ENCODE measurements at regions of chr1 and their contacts with region 1.

Region 1: GRCh38 chr1:40612345-40612831 is 53.1 kb downstream of the RIMS3 start:
- DNase-seq: peak in 1 of 2 donors; percentile 68
- H3K4me3 ChIP-seq: no peak overlapping the region
- H3K27ac ChIP-seq: no peak overlapping the region
- H3K4me1 ChIP-seq: peaks cover 0 to 4% (median 0%) of the 10 kb centered on the region in 4 donors
- H3K27me3 ChIP-seq: no peaks in the 10 kb centered on the region
- CTCF ChIP-seq: peak; percentile 73 to 84

Region 2: GRCh38 chr1:40449684-40450494 is 162.5 kb before region 1 on chr1 and contains the start of gene ZFP69B:
- intact Hi-C with region 1: no loop called
- DNase-seq: peak; percentile 81 to 93
- H3K4me3 ChIP-seq: peak within 1 kb of the TSS; percentile 67 to 71
- H3K27ac ChIP-seq: peak within 1 kb of the TSS; percentile 83 to 85
- H3K4me1 ChIP-seq: peaks cover 0 to 8% (median 3%) of the 10 kb centered on the region in 4 donors
- H3K27me3 ChIP-seq: no peaks in the 10 kb centered on the region
- CTCF ChIP-seq: no peak

Region 3: DNA sequence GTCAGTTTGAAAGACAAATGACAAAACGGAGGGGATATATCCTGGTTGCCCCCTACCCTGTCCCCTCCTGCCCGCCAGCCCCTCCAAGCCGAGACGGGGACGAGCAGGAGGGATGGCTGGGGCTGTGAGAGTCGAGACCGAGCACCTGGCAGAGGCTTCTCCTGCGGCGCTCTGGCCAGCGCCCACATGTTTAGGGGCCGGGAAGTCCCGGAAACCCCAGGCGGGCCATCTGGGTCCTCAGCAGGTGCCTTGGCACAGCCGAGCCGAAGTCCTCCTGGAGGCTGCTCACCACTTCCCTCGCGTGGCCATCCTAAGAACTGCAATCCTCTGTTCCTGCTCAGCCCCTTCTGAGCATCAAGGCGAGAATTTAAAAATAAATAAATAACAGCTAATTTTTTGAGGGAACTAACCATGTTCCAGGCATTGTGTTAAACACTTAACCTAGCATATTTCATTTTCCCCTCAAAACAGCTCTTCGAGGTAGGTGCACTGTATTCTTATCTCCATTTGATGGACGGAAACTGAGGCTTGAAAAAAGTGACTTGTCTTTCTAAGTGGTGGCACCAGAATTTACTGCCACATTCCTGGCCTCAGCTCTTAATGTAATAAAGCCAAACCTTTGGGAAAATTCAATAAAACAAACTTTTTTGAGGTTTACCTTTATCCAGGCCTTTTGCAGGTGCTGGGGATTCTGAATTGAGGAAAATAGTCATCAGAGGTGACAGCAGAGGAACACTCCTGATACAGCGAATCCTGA is 56.6 kb after region 1 on chr1:
- intact Hi-C with region 1: loop called (anchors 10 kb)
- DNase-seq: peak; percentile 68 to 83
- H3K4me3 ChIP-seq: no peak overlapping the region
- H3K27ac ChIP-seq: no peak overlapping the region
- H3K4me1 ChIP-seq: peaks cover 0 to 34% (median 26%) of the 10 kb centered on the region in 4 donors
- H3K27me3 ChIP-seq: no peaks in the 10 kb centered on the region
- CTCF ChIP-seq: peak; percentile 84 to 97

Region 4: DNA sequence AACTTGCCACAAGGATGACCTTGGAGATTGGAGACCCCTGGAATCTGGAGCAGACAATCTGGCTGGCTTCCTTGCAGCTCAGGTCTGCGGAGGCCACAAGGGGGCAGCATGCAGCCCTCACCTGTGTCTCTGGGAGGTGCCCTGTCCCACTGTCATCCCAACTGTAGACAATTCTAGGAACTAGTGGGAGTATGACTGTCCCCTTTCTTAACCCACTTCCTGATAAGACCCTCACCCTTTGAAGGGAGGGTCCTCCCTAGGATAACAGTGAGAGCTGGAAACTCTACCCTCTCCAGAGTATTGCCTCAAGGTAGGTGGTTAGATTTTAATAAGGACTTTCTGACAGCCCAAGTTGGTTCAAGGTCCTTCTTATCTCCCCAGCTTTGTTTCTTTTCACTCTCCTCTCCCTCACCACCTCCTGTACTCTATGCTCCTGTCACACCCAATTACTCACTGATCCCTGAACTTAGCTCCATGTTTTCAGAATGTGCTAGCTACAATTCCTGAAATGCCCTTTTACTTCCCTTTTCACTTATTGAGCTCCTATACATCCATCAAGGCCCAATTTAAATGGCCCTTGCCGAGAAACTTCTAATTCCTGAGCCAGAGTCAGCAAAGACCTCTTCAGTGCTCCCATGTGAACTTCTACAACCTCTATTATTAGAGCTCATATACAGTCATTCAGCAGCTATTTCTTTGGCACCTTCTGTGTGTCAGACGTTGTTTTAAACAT is 162.0 kb after region 1 on chr1:
- intact Hi-C with region 1: loop called (anchors 5 kb)
- DNase-seq: peak in 1 of 2 donors; percentile 66
- H3K4me3 ChIP-seq: no peak overlapping the region
- H3K27ac ChIP-seq: no peak overlapping the region
- H3K4me1 ChIP-seq: peaks cover 0 to 14% (median 3%) of the 10 kb centered on the region in 4 donors
- H3K27me3 ChIP-seq: no peaks in the 10 kb centered on the region
- CTCF ChIP-seq: peak; percentile 66 to 77

Region 5: DNA sequence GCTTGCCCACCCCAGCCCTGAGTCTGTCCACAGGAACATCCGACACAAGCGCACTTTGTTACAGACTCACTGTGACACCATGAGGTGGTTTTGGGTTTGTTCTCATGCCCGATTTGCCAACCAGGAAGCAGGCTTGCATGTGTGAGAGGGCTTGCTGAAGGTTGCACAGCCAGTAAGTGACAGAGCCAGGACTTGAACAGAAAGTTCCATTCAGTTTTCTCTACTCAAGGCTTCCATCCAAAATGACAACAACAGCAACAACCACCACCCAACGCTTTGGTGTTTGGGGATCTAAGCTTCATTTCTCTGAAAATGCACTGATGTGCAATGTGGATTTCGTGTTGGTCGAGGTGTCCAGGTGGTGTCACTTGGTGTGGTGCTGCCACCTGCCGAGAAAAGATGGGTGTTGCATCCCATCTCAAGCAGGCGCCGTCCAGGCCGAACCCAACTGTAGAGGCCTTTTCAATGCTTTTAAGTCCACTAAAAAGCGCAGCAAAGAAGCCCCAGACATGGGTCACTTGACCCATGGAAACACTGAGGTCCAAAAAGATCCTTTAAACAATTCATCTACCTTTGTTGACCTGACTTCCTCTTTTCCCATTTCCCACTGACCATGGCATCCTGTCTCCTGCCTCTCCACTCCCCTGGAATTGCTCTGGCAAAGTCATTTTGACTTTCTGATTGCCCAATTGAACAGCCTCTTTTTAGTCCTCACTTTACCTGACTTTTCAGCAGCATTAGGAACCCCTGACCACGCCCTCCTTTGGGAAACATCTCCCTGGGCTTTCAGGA is 237.6 kb after region 1 on chr1:
- intact Hi-C with region 1: loop called (anchors 5 kb)
- DNase-seq: peak; percentile 76 to 80
- H3K4me3 ChIP-seq: no peak overlapping the region
- H3K27ac ChIP-seq: no peak overlapping the region
- H3K4me1 ChIP-seq: peaks cover 0 to 15% (median 7%) of the 10 kb centered on the region in 4 donors
- H3K27me3 ChIP-seq: no peaks in the 10 kb centered on the region
- CTCF ChIP-seq: peak; percentile 92 to 93

Measured in tibial artery (tissue), 4 donors.